Dorsolateral prefrontal cortex (tissue), 120 donors: ENCODE measurements at regions of chr12 and their contacts with region 1.

Region 1: GRCh38 chr12:69738351-69739286 is at the start of gene RAB3IP:
- DNase-seq: peak; percentile 68 to 92 (median 78)
- H3K4me3 ChIP-seq: peak within 1 kb of the TSS; percentile 62 to 99 (median 88)
- H3K27ac ChIP-seq: peak within 1 kb of the TSS in 57 of 59 donors; percentile 37 to 95 (median 83)
- H3K27me3 ChIP-seq: peaks cover 0 to 3% (median 0%) of the 10 kb centered on the region in 45 donors
- CTCF ChIP-seq: peak in 55 of 56 donors; percentile 26 to 95 (median 71)
- total RNA-seq, gene RAB3IP: 28.6 to 77.4 (median 47.8) TPM

Region 2: GRCh38 chr12:69585189-69586062 is 153.2 kb before region 1 on chr12 and contains the start of gene CCT2:
- intact Hi-C with region 1: loop called in 1 of 2 experiments (anchors 10 kb)
- DNase-seq: peak; percentile 97 to 99 (median 98)
- H3K4me3 ChIP-seq: peak within 1 kb of the TSS; percentile 63 to 100 (median 95)
- H3K27ac ChIP-seq: peak within 1 kb of the TSS in 56 of 59 donors; percentile 5 to 96 (median 83)
- H3K27me3 ChIP-seq: no peaks in the 10 kb centered on the region
- CTCF ChIP-seq: peak in 51 of 56 donors; percentile 6 to 66 (median 39)
- total RNA-seq, gene CCT2: 66.9 to 156 (median 104) TPM

Region 3: DNA sequence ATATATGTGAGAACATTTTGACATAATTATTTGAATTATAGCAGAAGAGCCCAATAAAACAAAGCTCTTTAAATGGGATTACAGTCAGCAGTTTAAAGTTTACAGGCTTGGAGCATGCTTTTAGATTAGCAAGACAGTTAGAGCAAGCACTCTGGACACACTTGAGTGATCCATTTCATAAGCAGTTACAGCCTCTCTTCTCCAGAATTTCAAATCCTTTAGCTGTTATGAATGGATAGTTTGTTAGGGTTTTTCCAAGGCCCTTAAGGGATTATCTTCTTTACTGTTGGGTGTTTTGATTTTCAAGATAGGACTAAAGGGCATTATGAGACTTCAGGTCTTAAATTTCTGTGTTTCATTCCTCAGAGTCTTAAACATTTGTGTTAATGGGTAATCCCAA is 75.9 kb before region 1 on chr12:
- intact Hi-C with region 1: loop called in 1 of 2 experiments (anchors 10 kb)
- DNase-seq: no peak
- H3K4me3 ChIP-seq: no peak overlapping the region
- H3K27ac ChIP-seq: no peak overlapping the region
- H3K27me3 ChIP-seq: no peaks in the 10 kb centered on the region
- CTCF ChIP-seq: no peak

Region 4: GRCh38 chr12:69821456-69822159 is 83.0 kb after region 1 on chr12:
- intact Hi-C with region 1: loop called (anchors 5 to 10 kb)
- DNase-seq: peak in 2 of 10 donors; percentile 19 to 42
- H3K4me3 ChIP-seq: peak overlapping the region in 37 of 59 donors; percentile 1 to 55 (median 26)
- H3K27ac ChIP-seq: peak overlapping the region in 55 of 59 donors; percentile 2 to 88 (median 66)
- H3K27me3 ChIP-seq: peaks cover 0 to 5% (median 0%) of the 10 kb centered on the region in 45 donors
- CTCF ChIP-seq: peak in 2 of 56 donors; percentile 11 to 16

Region 5: DNA sequence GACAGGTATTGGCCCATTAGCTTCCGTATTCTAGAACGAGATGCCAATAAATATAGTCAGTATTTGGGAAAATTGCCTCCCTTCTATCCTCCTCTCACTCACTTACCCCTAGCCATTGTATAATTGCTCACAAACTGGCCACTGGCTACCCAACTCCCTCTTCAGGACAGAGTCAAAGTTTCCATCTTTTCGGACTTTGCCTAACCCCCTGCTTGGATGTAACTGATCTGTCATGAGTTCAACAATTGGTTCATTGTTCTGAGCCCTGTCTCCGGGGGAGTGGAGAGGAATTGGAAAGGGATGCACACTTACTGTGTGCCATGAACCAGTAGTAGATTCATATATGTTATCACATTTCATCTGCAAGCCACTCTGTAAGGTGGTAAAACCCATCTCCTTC is 98.6 kb after region 1 on chr12:
- intact Hi-C with region 1: loop called in 1 of 2 experiments (anchors 5 kb)
- DNase-seq: peak in 1 of 10 donors; percentile 14
- H3K4me3 ChIP-seq: no peak overlapping the region
- H3K27ac ChIP-seq: peak overlapping the region in 5 of 59 donors; percentile 8 to 34 (median 10)
- H3K27me3 ChIP-seq: peaks cover 0 to 6% (median 0%) of the 10 kb centered on the region in 45 donors
- CTCF ChIP-seq: peak in 8 of 56 donors; percentile 9 to 45 (median 18)